CD4-positive, alpha-beta memory T cell (primary cell): ENCODE measurements at regions of chr2 and their contacts with region 1.

Region 1: DNA sequence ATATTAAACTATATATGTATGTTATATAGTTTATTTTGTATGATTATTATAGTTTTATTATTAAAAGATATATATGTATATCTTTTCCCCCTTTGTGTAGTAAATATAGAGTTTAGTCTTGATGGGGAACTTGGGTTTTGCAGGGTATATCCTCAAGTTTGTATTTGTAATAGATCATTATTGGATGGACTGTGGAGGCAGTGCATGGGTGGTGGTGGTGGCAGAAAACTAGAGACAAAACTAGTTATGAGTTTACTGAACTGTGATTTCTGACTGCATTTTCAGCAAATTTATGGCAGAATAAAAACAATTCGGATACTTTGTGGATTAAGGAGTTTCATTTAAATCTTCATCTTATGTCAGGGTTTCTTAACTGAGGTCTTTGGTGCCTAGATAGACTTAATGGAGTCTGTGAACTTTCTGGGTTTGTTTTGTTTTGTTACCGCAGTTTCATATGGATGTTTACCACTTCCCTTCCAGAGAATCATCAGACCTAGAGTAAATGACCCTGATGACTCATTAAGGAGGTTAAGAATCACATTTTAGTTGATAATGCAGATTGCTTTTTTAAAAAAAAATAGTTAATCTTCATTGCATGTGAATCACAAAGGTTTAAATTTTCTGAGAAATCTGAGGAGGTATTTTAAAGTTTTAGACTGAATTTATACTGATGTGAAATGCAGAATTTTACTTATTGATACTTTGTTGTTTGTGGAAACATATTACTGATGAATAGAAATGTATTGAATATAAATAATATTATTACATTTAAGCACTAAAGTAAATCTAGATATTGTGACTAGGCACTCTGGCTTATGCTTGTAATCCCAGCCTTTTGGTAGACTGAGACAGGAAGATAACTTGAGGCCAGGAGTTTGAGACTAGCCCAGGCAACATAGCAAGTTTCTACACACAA is 14.5 kb downstream of the EPC2 start:
- DNase-seq: peak in 4 of 5 donors; percentile 51 to 74 (median 62)
- H3K4me3 ChIP-seq: no peak overlapping the region
- H3K4me3 Mint-ChIP-seq: peak overlapping the region in 7 of 8 donors; percentile 60 to 82 (median 69)
- H3K27ac ChIP-seq: peak overlapping the region; percentile 20
- H3K27ac Mint-ChIP-seq: peak overlapping the region; percentile 81 to 96 (median 93)
- H3K4me1 ChIP-seq: peaks cover 79% of the 10 kb centered on the region
- H3K4me1 Mint-ChIP-seq: peaks cover 66 to 86% (median 74%) of the 10 kb centered on the region in 4 donors
- H3K27me3 ChIP-seq: no peaks in the 10 kb centered on the region
- H3K27me3 Mint-ChIP-seq: no peaks in the 10 kb centered on the region

Region 2: DNA sequence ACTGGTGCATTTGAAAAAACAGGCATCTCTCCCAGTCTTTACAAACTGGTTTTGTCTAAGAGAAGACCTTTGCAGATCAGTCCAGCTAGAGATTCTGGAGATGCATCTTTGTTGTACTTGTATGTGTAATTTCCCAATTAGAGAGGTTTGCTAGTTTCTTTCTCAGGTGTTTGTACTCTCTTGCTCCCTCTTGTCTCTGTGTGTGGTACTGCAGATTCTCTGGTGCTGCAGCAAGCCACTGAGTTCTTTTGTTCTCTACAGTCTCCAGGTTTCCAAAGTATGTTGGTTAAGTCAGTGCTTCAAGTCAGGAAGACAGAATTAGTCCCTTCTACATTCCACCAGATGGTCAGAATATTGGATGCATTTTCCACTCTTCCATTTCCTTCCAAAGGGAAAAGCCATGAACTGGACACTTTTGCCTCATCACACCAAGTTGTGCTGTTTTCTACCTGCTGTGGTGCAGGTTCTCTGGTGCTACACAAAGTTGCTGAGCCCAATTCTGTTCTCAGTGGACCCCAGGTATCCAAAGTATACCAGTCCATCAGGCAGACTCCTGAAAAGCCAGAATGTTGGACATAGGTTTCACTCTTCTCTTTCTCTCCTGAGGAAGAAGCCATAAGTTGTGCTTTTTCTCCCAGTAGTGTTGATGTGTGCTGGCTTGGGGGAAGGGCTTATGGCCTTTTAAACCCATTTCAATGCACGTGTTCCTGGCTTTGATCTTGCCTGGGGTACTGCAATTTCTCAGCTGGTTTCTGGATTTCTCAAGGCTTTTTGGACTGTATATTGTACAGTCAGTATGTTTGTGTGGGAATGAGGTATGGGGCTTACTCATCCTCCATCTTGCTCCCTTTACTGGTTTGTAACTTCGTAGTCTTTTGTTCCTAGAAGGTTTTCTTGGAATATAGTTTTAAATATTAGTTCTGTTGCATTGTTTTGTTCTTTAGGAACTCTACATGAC is 15.3 kb after region 1 on chr2:
- CTCF ChIA-PET with region 1: interaction called, 5 read pairs
- POLR2A ChIA-PET with region 1: interaction called, 3 read pairs
- intact Hi-C with region 1: loop called (anchors 1 kb)
- DNase-seq: peak; percentile 43 to 53 (median 48)
- H3K4me3 ChIP-seq: no peak overlapping the region
- H3K4me3 Mint-ChIP-seq: peak overlapping the region in 6 of 8 donors; percentile 41 to 79 (median 59)
- H3K27ac ChIP-seq: no peak overlapping the region
- H3K27ac Mint-ChIP-seq: peak overlapping the region in 6 of 7 donors; percentile 0 to 84 (median 50)
- H3K4me1 ChIP-seq: peaks cover 49% of the 10 kb centered on the region
- H3K4me1 Mint-ChIP-seq: peaks cover 48 to 83% (median 65%) of the 10 kb centered on the region in 4 donors
- H3K27me3 ChIP-seq: no peaks in the 10 kb centered on the region
- H3K27me3 Mint-ChIP-seq: no peaks in the 10 kb centered on the region

Region 3: GRCh38 chr2:148739454-148740105 is 80.5 kb after region 1 on chr2:
- CTCF ChIA-PET with region 1: no interaction called
- POLR2A ChIA-PET with region 1: no interaction called
- intact Hi-C with region 1: loop called (anchors 5 kb)
- DNase-seq: no peak
- H3K4me3 ChIP-seq: no peak overlapping the region
- H3K4me3 Mint-ChIP-seq: peak overlapping the region in 2 of 8 donors; percentile 53 to 65
- H3K27ac ChIP-seq: no peak overlapping the region
- H3K27ac Mint-ChIP-seq: peak overlapping the region in 2 of 7 donors; percentile 2 to 85
- H3K4me1 ChIP-seq: peaks cover 57% of the 10 kb centered on the region
- H3K4me1 Mint-ChIP-seq: peaks cover 37 to 63% (median 53%) of the 10 kb centered on the region in 4 donors
- H3K27me3 ChIP-seq: no peaks in the 10 kb centered on the region
- H3K27me3 Mint-ChIP-seq: no peaks in the 10 kb centered on the region